Aorta (tissue), 5 donors: ENCODE measurements at regions of chr5 and their contacts with region 1.

Region 1: DNA sequence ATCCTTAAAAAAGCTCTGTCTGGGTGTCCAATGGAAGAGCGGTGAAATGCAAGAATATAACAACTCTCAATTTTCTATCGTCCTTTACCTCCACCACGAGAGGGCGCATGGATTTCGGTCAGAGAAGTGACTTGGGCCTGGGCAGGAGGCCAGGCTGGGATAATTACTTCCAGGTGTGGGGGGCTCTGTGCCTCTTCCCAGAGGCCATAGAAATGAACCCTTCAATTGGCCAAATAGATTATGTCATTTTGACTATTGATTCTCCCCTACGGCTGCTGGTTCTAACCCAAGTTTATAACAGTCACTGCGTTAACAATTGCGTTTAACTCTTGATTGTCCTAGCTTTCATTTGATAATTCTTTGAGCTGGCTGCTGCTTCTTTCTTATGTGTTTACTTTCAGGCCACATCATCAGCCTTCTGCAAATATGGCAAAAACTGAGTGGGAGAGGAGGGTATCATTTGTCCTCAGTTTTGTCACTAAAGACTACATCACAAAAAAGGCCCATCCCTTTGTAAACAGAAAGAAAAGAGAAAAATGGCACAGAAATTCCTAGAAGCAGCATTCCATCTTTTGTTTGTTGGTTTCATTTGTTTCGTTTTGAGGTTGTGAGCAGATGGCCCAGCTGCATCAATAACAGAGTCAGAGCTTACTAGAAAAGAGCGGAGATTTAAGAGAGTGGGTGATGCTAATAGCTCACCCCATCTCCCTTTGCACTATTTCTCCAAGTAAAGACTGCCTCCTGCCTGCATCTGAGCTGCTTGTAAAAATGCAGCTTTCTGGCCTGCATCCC is 45.4 kb upstream of the ZFR start:
- DNase-seq: peak; percentile 82 to 92
- ATAC-seq: peak; percentile 83
- H3K4me3 ChIP-seq: no peak overlapping the region
- H3K27ac ChIP-seq: no peak overlapping the region
- H3K4me1 ChIP-seq: no peaks in the 10 kb centered on the region
- H3K27me3 ChIP-seq: no peaks in the 10 kb centered on the region

Region 2: GRCh38 chr5:32613050-32613672 is 123.2 kb after region 1 on chr5:
- intact Hi-C with region 1: loop called (anchors 2 to 5 kb)
- DNase-seq: peak; percentile 87 to 93
- ATAC-seq: peak; percentile 87
- H3K4me3 ChIP-seq: no peak overlapping the region
- H3K27ac ChIP-seq: no peak overlapping the region
- H3K4me1 ChIP-seq: peaks cover 5% of the 10 kb centered on the region in 2 donors
- H3K27me3 ChIP-seq: no peaks in the 10 kb centered on the region

Region 3: GRCh38 chr5:32975656-32976375 is 485.8 kb after region 1 on chr5:
- intact Hi-C with region 1: no loop called
- DNase-seq: no peak
- ATAC-seq: no peak
- H3K4me3 ChIP-seq: no peak overlapping the region
- H3K27ac ChIP-seq: no peak overlapping the region
- H3K4me1 ChIP-seq: no peaks in the 10 kb centered on the region
- H3K27me3 ChIP-seq: no peaks in the 10 kb centered on the region